ENCODE measurements at regions of chr3 and their contacts with region 1.

Region 1: DNA sequence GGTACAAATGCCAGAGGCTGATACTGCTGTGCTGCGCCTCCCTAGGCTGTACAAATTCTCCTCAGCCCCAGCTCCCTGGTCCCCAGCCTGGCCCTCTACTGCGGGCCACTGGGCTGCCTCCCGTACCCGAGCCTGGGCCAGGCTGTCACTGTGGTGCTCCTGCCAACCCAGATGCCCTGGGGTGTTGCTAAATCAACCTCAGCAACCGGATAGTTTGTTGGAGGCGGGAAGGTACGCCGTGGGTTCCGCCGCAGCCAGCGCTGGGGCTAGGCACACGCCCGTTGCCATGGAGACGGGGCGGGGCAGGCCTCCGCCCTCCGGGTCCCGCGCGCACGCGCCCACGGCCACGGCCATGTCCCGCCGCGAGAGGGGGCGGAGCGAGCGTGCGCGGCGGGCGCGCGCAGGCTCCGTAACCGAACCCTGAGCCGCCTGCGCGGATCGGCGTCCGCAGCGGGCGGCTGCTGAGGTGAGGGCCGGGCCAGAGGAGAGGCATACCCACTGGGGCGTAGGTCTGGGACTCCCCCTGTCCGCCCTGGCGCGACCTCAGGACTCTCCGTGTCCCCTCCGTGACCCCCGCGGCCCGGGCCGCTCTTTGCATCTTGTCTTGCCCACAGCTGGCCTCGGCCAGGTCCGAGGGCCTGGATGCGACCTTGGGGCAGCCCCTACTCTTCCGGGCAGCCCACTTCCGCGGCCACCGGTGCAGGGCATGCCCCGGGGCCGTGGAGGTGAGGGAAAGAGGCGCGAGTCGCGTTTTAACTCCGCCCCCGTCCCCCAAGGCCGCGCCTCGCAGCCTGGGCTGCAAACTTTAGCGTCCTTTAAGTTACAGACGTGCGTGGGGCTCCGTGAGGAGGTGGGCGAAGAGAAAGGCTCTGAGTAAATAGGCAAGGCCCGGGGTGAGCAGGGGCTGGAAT is at the start of gene TEX264:
- DNase-seq: no peak
- H3K4me3 ChIP-seq: peak within 1 kb of the TSS; percentile 82
- CTCF ChIP-seq: no peak

Region 2: GRCh38 chr3:51538459-51539290 is 132.4 kb before region 1 on chr3 and contains the start of gene RAD54L2:
- CTCF ChIA-PET with region 1: interaction called, 28 read pairs
- POLR2A ChIA-PET with region 1: no interaction called
- DNase-seq: no peak
- H3K4me3 ChIP-seq: peak within 1 kb of the TSS; percentile 75
- CTCF ChIP-seq: peak; percentile 33

Region 3: DNA sequence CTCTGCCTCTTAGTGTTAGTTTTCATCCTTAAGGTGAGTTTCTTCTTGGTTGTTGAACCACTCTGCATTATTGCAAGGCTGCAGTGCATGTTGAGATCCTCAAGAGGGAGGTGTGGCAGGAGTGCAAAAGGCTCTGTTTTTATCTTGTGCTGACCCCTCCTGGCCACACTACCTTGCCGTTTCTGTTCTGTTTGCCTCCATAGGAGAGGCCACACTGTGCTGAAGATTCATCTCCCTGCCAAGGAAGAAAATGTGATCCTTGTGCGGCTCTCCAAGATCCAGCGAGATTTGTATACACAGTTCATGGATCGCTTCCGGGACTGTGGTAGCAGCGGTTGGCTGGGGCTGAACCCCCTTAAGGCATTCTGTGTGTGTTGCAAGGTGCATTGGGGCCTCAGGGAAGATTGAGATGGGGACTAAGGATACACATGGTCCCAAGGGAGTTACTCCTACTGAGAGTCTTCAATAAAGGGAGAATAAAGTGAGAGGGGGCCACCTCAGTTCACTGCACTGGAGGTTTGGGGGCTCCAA is 33.1 kb before region 1 on chr3:
- CTCF ChIA-PET with region 1: interaction called, 88 read pairs
- POLR2A ChIA-PET with region 1: no interaction called
- DNase-seq: no peak
- H3K4me3 ChIP-seq: no peak overlapping the region
- CTCF ChIP-seq: peak; percentile 85

Region 4: GRCh38 chr3:51657234-51657633 is 13.8 kb before region 1 on chr3:
- CTCF ChIA-PET with region 1: interaction called, 35 read pairs
- POLR2A ChIA-PET with region 1: no interaction called
- DNase-seq: no peak
- H3K4me3 ChIP-seq: no peak overlapping the region
- CTCF ChIP-seq: no peak

Region 5: DNA sequence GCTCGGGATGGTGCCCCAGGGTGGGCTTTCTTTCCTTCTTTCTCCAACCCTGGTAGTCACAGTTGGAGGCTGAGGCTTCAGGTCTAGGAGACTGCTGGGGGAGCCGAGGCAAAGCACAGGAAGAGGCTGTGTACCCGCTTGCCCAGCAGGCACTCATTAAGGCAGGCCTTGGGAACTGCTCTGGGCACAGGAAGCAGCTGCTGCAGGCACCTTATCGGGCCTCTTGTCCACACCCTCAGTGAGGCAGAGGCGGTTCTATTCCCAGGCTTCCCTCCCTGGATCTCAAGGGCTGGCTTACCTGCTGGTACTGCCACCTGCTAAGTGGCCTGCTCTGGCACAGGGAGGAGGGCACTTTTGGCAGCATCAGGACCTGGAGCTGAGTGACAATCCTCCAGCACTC is 19.9 kb after region 1 on chr3:
- CTCF ChIA-PET with region 1: interaction called, 196 read pairs
- POLR2A ChIA-PET with region 1: no interaction called
- DNase-seq: no peak
- H3K4me3 ChIP-seq: no peak overlapping the region
- CTCF ChIP-seq: no peak

Region 6: GRCh38 chr3:51718547-51719409 is 47.7 kb after region 1 on chr3:
- CTCF ChIA-PET with region 1: no interaction called
- POLR2A ChIA-PET with region 1: no interaction called
- DNase-seq: no peak
- H3K4me3 ChIP-seq: no peak overlapping the region
- CTCF ChIP-seq: peak; percentile 63